ENCODE measurements at regions of chr17 and their contacts with region 1.

Region 1: GRCh38 chr17:63425482-63425881 is 20.6 kb downstream of the CYB561 start:
- DNase-seq: peak; percentile 68
- ATAC-seq: peak; percentile 87 to 88
- H3K4me3 ChIP-seq: no peak overlapping the region
- H3K27ac ChIP-seq: no peak overlapping the region
- H3K4me1 ChIP-seq: peaks cover 29% of the 10 kb centered on the region
- H3K27me3 ChIP-seq: no peaks in the 10 kb centered on the region
- CTCF ChIP-seq: peak; percentile 95

Region 2: GRCh38 chr17:63549946-63550807 is 124.7 kb after region 1 on chr17 and contains the start of gene DCAF7:
- intact Hi-C with region 1: no loop called
- DNase-seq: peak; percentile 98
- ATAC-seq: peak; percentile 98 to 99
- H3K4me3 ChIP-seq: peak within 1 kb of the TSS; percentile 100
- H3K27ac ChIP-seq: peak within 1 kb of the TSS; percentile 97
- H3K4me1 ChIP-seq: peaks cover 49% of the 10 kb centered on the region
- H3K27me3 ChIP-seq: no peaks in the 10 kb centered on the region
- CTCF ChIP-seq: no peak
- total RNA-seq, gene DCAF7: 93.8 TPM

Region 3: DNA sequence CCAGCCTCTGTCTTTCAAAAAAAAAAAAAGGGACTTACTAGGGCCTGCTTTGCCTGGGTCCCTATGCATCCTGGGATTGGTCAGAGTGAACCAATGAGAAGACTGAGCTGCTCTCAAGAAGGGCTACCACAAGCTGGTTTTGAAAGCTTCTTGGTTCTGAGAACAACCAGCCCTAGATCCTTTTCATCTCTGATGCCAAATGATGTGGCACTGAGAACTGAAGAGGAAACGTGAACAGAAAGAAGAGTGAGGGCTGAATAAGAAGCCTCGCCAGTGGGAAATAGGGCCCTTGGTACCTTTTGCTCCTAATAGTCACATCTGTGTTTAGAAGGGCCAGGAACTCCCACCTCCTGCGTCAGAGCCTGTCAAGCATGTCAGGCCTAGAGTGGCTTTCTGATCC is 185.9 kb after region 1 on chr17:
- intact Hi-C with region 1: loop called (anchors 10 kb)
- DNase-seq: no peak
- ATAC-seq: no peak
- H3K4me3 ChIP-seq: no peak overlapping the region
- H3K27ac ChIP-seq: no peak overlapping the region
- H3K4me1 ChIP-seq: no peaks in the 10 kb centered on the region
- H3K27me3 ChIP-seq: no peaks in the 10 kb centered on the region
- CTCF ChIP-seq: no peak